HepG2 (cell line): ENCODE measurements at regions of chr4 and their contacts with region 1.

Region 1: DNA sequence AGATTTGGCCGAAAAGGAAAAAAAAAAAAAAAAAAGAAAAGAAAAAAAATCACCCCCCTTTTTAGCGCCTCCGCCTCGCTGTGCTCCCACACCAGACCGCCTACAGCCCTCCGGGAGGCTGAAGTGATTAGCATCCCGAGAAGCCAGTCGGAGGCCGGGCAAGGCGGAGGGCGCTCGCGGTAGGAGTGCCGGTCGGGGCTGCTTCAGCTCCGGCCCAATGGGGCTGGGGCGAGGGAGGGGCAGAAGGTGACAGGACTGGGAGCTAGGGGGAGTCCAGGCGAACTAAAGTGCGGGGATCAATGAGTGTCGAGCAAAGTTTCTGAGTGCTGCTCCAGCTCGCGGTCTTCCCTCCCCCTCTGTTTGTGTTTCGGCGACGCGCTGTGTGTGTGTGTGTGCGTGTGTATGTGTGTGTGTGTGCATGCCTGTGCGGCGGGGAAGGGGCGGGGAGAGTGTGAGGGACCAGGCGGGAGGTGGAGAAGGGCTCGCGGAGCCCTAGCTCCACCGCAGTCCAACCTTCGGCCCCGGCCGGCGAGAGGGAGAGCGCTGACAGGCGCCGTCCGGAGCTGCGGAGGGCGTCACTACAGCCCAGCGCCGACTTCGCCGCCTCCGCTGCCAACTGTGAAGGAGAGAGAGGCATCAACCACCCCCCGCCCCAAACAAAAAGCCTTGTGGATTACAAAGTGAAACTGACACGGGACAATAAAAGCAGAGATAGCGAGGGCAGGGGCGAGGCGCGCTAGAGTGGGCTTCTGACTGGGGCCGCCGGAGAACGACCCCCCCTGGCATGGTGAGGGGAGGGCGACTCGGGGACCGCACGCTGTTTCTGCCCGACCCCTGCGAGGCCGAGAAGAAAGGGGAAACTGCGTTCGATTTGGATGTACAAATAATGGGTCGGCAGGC is at the start of gene FAT4:
- DNase-seq: peak; percentile 88
- ATAC-seq: peak; percentile 95
- H3K4me3 ChIP-seq: peak within 1 kb of the TSS; percentile 70 to 77 (median 76)
- H3K27ac ChIP-seq: peak within 1 kb of the TSS; percentile 83
- H3K4me1 ChIP-seq: peaks cover 20% of the 10 kb centered on the region
- H3K27me3 ChIP-seq: peaks cover 0 to 6% of the 10 kb centered on the region in 2 experiments; a peak in 1 of 5 replicates
- CTCF ChIP-seq: peak; percentile 52
- EP300 ChIP-seq: peak in 1 of 2 experiments; percentile 40; a peak in 1 of 4 replicates
- POLR2A ChIP-seq: 0 out of 4 replicates have a peak, but pooled peaks of 1 of the 2 experiments have one; percentile 28
- RAD21 ChIP-seq: no peak
- total RNA-seq, gene FAT4: 0.27 TPM in 2 replicates

Region 2: GRCh38 chr4:125432104-125432503 is 117.2 kb after region 1 on chr4:
- CTCF ChIA-PET with region 1: no interaction called
- POLR2A ChIA-PET with region 1: no interaction called
- in situ Hi-C with region 1: no loop called
- intact Hi-C with region 1: loop called (anchors 5 kb)
- DNase-seq: peak; percentile 0
- ATAC-seq: 0 out of 3 replicates have a peak, but pooled peaks have one; percentile 43
- H3K4me3 ChIP-seq: no peak overlapping the region
- H3K27ac ChIP-seq: no peak overlapping the region
- H3K4me1 ChIP-seq: no peaks in the 10 kb centered on the region
- H3K27me3 ChIP-seq: no peaks in the 10 kb centered on the region
- CTCF ChIP-seq: no peak
- EP300 ChIP-seq: no peak
- POLR2A ChIP-seq: no peak
- RAD21 ChIP-seq: no peak

Region 3: GRCh38 chr4:125590158-125590557 is 275.2 kb after region 1 on chr4:
- CTCF ChIA-PET with region 1: no interaction called
- POLR2A ChIA-PET with region 1: no interaction called
- in situ Hi-C with region 1: no loop called
- intact Hi-C with region 1: loop called (anchors 10 kb)
- DNase-seq: peak; percentile 18
- ATAC-seq: peak; percentile 98
- H3K4me3 ChIP-seq: no peak overlapping the region; a peak in 1 of 6 replicates
- H3K27ac ChIP-seq: no peak overlapping the region
- H3K4me1 ChIP-seq: peaks cover 5% of the 10 kb centered on the region; the same call in 1 of the 2 replicates
- H3K27me3 ChIP-seq: no peaks in the 10 kb centered on the region
- CTCF ChIP-seq: no peak
- EP300 ChIP-seq: no peak
- POLR2A ChIP-seq: no peak
- RAD21 ChIP-seq: no peak

Region 4: GRCh38 chr4:125750828-125751466 is 436.0 kb after region 1 on chr4:
- CTCF ChIA-PET with region 1: interaction called, 12 read pairs
- POLR2A ChIA-PET with region 1: no interaction called
- in situ Hi-C with region 1: loop called (anchors 5 kb)
- intact Hi-C with region 1: loop called (anchors 1 kb)
- DNase-seq: peak; percentile 23
- ATAC-seq: peak; percentile 94
- H3K4me3 ChIP-seq: no peak overlapping the region
- H3K27ac ChIP-seq: no peak overlapping the region
- H3K4me1 ChIP-seq: no peaks in the 10 kb centered on the region
- H3K27me3 ChIP-seq: no peaks in the 10 kb centered on the region
- CTCF ChIP-seq: peak; percentile 73
- EP300 ChIP-seq: no peak
- POLR2A ChIP-seq: no peak
- RAD21 ChIP-seq: 0 out of 2 replicates have a peak, but pooled peaks have one; percentile 30

Region 5: GRCh38 chr4:126051689-126052424 is 736.9 kb after region 1 on chr4:
- CTCF ChIA-PET with region 1: no interaction called
- POLR2A ChIA-PET with region 1: no interaction called
- in situ Hi-C with region 1: no loop called
- intact Hi-C with region 1: loop called (anchors 5 kb)
- DNase-seq: no peak
- ATAC-seq: no peak
- H3K4me3 ChIP-seq: no peak overlapping the region
- H3K27ac ChIP-seq: no peak overlapping the region
- H3K4me1 ChIP-seq: no peaks in the 10 kb centered on the region
- H3K27me3 ChIP-seq: no peaks in the 10 kb centered on the region
- CTCF ChIP-seq: no peak
- EP300 ChIP-seq: no peak
- POLR2A ChIP-seq: no peak
- RAD21 ChIP-seq: no peak

Region 6: DNA sequence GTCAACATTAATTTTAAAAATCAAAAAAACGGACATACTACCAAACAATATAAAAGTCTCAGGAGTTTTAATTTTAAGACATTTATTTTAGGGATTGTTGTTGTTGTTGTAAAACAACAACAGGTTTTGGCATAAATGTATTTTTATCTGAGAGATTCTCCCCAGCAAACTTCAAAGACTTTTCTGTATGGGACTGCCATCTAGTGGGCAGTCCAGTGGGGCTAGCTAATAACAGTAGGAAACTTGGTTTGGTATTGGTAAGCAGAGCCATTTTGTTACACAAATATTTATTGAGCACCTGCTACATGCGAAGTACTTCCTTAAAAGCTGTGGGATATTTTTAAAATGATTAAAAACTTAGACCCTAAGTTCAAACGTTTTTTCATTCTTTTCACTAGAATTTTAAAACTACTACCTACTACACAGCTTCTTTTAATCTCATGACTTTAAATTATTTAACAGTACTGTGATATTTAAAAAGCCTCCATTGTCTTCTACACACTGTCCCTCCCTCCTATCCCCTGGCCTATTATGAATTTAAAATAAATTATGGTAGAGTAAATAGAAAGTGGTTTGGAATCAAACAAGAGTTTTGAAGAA is 1289.4 kb after region 1 on chr4:
- CTCF ChIA-PET with region 1: interaction called, 7 read pairs
- POLR2A ChIA-PET with region 1: no interaction called
- in situ Hi-C with region 1: loop called (anchors 25 kb)
- intact Hi-C with region 1: loop called (anchors 1 kb)
- DNase-seq: peak; percentile 18
- ATAC-seq: peak; percentile 76
- H3K4me3 ChIP-seq: no peak overlapping the region
- H3K27ac ChIP-seq: no peak overlapping the region
- H3K4me1 ChIP-seq: no peaks in the 10 kb centered on the region
- H3K27me3 ChIP-seq: no peaks in the 10 kb centered on the region
- CTCF ChIP-seq: peak; percentile 62
- EP300 ChIP-seq: no peak
- POLR2A ChIP-seq: no peak
- RAD21 ChIP-seq: no peak